ENCODE measurements at regions of chr14 and their contacts with region 1.

Region 1: DNA sequence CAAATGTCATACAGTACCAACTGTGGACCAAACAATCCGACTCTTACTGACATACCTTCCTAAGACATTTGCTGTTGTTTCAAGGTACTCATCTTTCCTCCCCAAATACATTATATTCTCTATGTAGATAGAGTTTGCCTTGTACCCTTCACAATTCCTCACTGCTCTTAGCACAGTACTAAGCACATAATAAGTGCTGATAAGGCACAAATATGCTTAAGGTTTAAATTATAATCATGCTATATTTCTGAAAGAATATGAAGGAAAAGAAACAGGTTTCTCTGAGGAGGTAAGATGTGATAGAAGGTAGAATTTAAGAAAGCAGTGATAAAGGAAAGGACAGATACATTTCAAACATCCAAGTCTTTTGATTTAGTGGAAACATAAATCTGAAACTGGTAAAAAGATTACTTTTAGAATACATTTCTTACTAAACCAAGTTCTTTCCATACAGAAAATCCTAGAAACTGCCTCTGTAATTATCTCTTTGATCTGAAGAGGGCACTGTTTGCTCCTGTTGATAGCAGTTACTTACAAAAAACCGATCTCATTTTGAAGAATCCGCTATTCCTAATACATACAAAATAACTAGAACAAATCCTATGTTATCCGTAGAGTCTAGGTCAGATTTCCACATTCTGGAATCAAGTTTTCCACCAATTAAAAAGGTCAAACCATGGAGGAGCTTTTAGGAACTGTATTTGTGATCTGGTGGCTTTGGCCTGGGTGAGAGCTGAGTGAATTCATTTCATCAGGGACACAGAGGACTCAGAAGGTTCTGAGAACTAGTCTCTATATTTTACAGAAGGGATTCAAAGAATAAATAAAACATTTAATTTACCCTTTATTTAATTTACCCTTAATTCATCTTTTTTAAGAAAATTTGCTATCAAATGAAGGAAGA is 311.9 kb downstream of the DAD1 start:
- DNase-seq: peak in 1 of 2 experiments; percentile 25
- ATAC-seq: no peak
- H3K4me3 ChIP-seq: no peak overlapping the region
- H3K27ac ChIP-seq: no peak overlapping the region
- H3K4me1 ChIP-seq: no peaks in the 10 kb centered on the region
- CTCF ChIP-seq: peak; percentile 68
- EP300 ChIP-seq: no peak
- POLR2A ChIP-seq: no peak
- RAD21 ChIP-seq: peak; percentile 25 to 30; a peak in 2 of 5 replicates

Region 2: GRCh38 chr14:21868442-21869046 is 408.6 kb before region 1 on chr14:
- CTCF ChIA-PET with region 1: no interaction called
- POLR2A ChIA-PET with region 1: no interaction called
- DNase-seq: peak; percentile 31 to 56
- ATAC-seq: peak; percentile 94 to 97
- H3K4me3 ChIP-seq: no peak overlapping the region
- H3K27ac ChIP-seq: no peak overlapping the region
- H3K4me1 ChIP-seq: no peaks in the 10 kb centered on the region
- CTCF ChIP-seq: peak; percentile 61
- EP300 ChIP-seq: no peak
- POLR2A ChIP-seq: no peak
- RAD21 ChIP-seq: peak in 1 of 2 experiments; percentile 55; a peak in 2 of 5 replicates

Region 3: GRCh38 chr14:22231018-22231417 is 46.1 kb before region 1 on chr14:
- CTCF ChIA-PET with region 1: no interaction called
- POLR2A ChIA-PET with region 1: no interaction called
- DNase-seq: no peak
- ATAC-seq: no peak
- H3K4me3 ChIP-seq: no peak overlapping the region
- H3K27ac ChIP-seq: no peak overlapping the region
- H3K4me1 ChIP-seq: no peaks in the 10 kb centered on the region
- CTCF ChIP-seq: no peak
- EP300 ChIP-seq: no peak
- POLR2A ChIP-seq: no peak
- RAD21 ChIP-seq: no peak

Region 4: GRCh38 chr14:22289559-22289958 is 12.4 kb after region 1 on chr14:
- CTCF ChIA-PET with region 1: interaction called, 18 read pairs
- POLR2A ChIA-PET with region 1: no interaction called
- DNase-seq: no peak
- ATAC-seq: no peak
- H3K4me3 ChIP-seq: no peak overlapping the region
- H3K27ac ChIP-seq: no peak overlapping the region
- H3K4me1 ChIP-seq: no peaks in the 10 kb centered on the region
- CTCF ChIP-seq: no peak
- EP300 ChIP-seq: no peak
- POLR2A ChIP-seq: no peak
- RAD21 ChIP-seq: no peak